Thyroid gland (tissue), 4 donors: ENCODE measurements at regions of chr1 and their contacts with region 1.

Region 1: DNA sequence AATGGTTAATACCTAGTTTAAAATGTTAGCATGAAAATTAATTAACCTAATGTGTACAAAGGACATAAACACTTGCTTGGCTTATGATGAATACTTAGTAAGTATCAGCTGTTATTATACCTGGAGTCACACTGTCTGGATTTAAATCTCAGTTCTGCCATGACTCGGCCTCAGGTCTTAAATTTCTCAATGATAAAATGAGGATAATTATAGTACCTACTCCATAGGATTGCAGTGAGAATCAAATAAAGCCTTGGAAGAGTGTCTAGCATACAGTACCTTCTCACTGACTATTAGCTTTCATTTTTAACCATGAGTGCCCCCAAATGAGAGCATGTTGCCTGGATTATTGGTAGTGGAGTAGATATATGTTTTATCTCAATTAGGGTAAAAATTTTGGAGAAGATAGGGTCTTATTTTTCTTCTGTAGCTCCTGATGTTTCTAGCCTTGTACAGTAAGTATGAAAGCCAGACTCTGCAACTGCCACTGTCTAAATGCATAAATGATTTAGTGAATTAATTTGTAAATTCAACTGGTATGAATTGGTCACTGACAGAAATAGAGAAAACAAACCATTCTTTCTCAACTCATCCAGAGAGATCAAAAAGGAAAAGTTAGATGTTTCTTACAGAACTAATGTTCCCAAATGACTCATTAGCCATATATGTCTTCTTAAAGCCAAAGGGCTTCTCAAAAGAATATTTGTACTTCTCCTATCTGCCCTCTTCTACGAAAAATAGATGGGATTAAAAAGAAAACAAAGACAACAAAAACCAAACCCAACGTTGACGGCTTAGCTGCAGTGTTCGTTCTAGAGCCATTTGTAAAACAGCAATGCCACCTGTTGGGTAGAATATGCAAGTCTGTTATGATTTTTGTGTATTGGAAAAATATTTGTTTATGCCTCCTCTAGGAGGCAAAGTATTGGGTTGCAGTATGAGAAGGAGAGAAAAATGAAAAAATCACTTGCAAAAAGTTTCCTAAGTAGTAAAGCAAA is 53.8 kb upstream of the MROH9 start:
- DNase-seq: peak; percentile 4 to 14
- H3K4me3 ChIP-seq: no peak overlapping the region
- H3K27ac ChIP-seq: peak overlapping the region in 1 of 3 donors; percentile 26
- H3K4me1 ChIP-seq: no peaks in the 10 kb centered on the region
- H3K27me3 ChIP-seq: no peaks in the 10 kb centered on the region
- CTCF ChIP-seq: peak; percentile 40 to 98 (median 78)
- POLR2A ChIP-seq: no peak

Region 2: DNA sequence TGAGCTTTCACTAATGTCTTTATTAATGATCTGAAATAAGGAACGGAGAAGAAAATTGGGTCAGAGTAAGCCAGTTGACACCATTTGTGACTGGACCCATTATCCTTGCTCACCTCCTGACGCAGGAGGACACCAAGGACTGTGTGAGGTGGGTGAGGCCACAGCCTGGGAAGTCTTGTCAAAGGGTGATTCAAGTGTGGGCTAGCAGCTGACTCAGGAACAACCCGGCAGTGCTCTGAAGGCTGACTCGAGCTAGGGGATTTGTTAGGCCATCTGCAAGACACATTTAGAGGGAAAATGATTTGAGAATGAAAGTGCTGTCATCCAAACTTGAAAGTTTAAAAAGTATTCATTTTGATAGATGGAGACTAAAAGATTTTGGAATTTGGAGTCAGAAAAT is 196.4 kb before region 1 on chr1:
- intact Hi-C with region 1: loop called (anchors 5 kb)
- DNase-seq: no peak
- H3K4me3 ChIP-seq: no peak overlapping the region
- H3K27ac ChIP-seq: no peak overlapping the region
- H3K4me1 ChIP-seq: peaks cover 0 to 5% of the 10 kb centered on the region in 2 donors
- H3K27me3 ChIP-seq: no peaks in the 10 kb centered on the region
- CTCF ChIP-seq: no peak
- POLR2A ChIP-seq: no peak

Region 3: GRCh38 chr1:170776777-170777176 is 104.8 kb before region 1 on chr1:
- intact Hi-C with region 1: loop called (anchors 10 kb)
- DNase-seq: no peak
- H3K4me3 ChIP-seq: no peak overlapping the region
- H3K27ac ChIP-seq: no peak overlapping the region
- H3K4me1 ChIP-seq: no peaks in the 10 kb centered on the region
- H3K27me3 ChIP-seq: no peaks in the 10 kb centered on the region
- CTCF ChIP-seq: no peak
- POLR2A ChIP-seq: no peak

Region 4: GRCh38 chr1:170939476-170939875 is 57.9 kb after region 1 on chr1:
- intact Hi-C with region 1: no loop called
- DNase-seq: no peak
- H3K4me3 ChIP-seq: no peak overlapping the region
- H3K27ac ChIP-seq: no peak overlapping the region
- H3K4me1 ChIP-seq: no peaks in the 10 kb centered on the region
- H3K27me3 ChIP-seq: no peaks in the 10 kb centered on the region
- CTCF ChIP-seq: no peak
- POLR2A ChIP-seq: no peak